ENCODE measurements at regions of chr17 and their contacts with region 1.

Region 1: DNA sequence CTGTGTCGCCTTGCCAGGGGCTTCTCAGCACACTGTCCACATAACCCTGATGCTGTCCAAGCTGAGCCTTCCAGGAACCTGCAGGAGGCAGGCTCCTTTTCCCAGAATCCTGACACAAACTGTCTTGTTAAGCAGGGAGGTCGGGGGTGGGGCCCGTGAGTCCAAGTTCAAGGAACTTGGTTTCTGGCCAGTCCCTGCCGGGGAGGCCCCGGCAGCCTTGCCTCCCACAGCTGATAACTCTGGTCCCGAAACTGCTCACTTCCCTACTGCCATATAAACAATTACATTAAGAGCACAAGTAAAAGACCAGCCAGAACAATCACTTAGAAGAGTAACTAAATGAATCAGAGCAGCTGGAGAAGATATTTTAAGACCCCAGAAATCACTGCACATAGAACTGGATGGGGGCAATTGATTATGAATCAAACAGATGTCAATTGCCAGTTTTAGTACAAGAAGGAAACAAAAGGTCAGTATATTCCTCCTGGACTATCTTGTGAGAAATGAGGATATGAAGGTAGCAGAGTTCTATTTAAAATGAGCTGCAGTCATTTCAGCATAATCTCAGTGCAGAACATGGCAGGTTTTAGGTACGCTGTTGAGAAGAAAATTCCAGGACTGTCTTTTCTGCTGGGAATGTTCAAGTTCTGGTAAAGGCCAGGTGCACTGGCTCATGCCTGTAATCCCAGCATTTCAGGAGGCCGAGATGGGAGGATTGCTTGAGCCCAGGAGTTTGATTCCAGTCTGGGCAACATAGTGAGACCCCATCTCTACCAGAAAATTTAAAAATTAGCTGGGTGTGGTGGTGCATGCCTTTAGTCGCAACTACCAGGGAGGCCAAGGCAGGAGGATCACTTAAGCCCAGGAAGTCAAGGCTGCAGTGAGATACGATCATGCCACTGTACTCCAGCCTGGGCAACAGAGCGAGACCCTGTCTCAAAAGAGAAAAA is 169.8 kb downstream of the PITPNC1 start:
- DNase-seq: peak in 1 of 2 donors; percentile 29
- H3K4me3 ChIP-seq: no peak overlapping the region
- H3K27ac ChIP-seq: no peak overlapping the region
- H3K4me1 ChIP-seq: peaks cover 0 to 6% (median 0%) of the 10 kb centered on the region in 4 donors
- H3K27me3 ChIP-seq: no peaks in the 10 kb centered on the region
- CTCF ChIP-seq: no peak

Region 2: DNA sequence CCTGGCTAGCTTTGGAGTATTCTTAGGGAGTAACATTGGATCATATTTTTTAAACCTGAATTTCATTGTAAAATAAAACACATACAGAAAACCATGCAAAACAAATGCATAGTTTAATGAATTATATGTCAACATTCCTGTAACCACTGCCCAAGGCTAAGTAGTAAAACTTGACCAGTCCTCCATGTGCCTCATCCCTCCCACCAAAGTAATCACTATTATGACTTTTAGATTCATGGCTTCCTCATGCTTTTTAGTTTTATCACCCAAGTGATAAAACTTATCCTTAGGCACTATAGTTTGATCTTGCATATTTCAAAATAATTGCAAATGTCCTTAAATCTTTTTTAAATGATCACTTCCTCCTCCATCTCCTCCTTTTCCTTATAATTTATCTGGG is 1224.1 kb before region 1 on chr17:
- intact Hi-C with region 1: no loop called
- DNase-seq: no peak
- H3K4me3 ChIP-seq: no peak overlapping the region
- H3K27ac ChIP-seq: no peak overlapping the region
- H3K4me1 ChIP-seq: no peaks in the 10 kb centered on the region
- H3K27me3 ChIP-seq: no peaks in the 10 kb centered on the region
- CTCF ChIP-seq: no peak

Region 3: DNA sequence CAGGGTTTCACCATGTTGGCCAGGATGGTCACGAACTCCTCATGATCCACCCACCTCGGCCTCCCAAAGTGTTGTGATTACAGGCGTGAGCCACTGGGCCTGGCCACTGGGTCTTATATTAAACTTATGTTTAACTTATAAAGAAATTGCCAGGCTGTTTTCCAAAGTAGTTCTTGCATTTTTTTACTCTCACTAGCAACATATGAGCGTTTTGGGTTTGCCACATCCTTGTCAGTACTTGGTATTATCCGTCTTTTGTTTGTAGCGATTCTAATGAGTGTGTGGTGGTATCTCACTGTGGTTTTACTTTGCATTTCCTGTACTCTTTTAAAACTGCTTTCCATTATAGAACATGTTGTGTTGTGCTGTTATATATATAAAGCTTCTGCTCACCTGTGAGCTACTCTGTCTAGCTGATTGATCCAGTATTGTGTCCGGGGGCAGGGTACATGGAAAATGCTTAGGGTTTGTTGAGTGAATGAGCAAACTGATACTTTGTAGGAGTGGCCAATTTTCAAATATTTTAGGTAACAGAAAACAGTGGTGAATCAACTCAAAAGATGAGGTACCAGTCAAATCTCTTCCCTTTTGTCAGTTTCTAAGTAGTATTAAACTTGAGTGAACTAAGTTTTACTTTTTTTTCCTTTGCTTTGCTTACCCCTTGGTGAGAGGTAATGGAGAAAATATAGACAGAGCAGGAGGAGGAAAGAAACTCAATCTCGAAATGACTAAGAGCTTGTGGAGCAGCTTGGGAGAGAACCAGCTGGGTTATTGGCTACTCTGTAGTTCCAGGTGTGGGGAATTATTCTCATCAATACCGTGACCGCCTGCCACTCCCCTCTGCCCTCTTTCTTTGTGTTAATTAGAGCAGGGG is 93.9 kb before region 1 on chr17:
- intact Hi-C with region 1: loop called (anchors 10 kb)
- DNase-seq: no peak
- H3K4me3 ChIP-seq: no peak overlapping the region
- H3K27ac ChIP-seq: no peak overlapping the region
- H3K4me1 ChIP-seq: no peaks in the 10 kb centered on the region
- H3K27me3 ChIP-seq: no peaks in the 10 kb centered on the region
- CTCF ChIP-seq: no peak